HCT116 (cell line): ENCODE measurements at regions of chr1 and their contacts with region 1.

Region 1: DNA sequence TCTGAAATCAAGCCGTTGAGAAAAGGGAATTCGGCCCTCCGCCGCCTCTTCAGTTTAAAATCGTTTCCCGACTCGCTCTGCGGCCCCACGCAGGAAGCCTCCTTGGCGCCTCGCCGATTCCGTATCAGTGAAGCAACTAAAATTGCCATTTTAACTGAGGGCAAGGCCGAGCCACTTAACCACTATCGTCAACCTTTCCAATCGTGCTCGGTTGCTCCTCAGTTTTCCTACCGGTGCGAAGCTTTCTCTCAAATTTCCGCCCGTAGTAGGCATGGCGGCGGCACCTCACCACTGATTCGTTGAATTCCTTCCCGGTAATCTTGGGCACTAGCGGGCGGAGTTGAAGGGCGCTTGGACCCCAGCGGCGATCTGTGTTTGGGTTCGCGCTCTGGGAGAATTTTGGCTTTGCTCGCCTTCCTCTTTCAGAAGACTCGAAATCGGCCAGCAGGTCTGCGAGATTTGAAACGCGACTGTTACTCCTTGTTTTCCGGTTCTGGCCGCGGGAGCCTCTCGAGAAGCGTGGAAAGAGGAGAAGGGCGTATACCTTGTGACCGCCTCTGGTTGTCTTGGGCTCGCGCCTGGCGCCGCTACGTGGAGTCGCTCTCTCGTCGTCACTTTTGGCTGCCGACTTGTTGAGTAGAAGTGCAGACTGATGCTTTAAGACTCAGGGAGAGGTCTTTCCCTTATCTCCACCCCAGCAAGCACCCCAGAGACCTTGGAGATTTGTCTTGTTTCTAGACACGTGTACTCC is at the starts of genes CENPL and DARS2:
- DNase-seq: peak; percentile 96
- ATAC-seq: peak; percentile 89
- H3K4me3 ChIP-seq: peak within 1 kb of the TSS; percentile 96 to 97
- H3K27ac ChIP-seq: peak within 1 kb of the TSS; percentile 82
- H3K4me1 ChIP-seq: peaks cover 2 to 7% of the 10 kb centered on the region in 2 experiments; a peak in 2 of 4 replicates
- H3K27me3 ChIP-seq: no peaks in the 10 kb centered on the region
- CTCF ChIP-seq: no peak
- POLR2A ChIP-seq: peak; percentile 26
- RAD21 ChIP-seq: no peak
- total RNA-seq, gene CENPL: 20.3 TPM
- total RNA-seq, gene DARS2: 25.6 TPM

Region 2: DNA sequence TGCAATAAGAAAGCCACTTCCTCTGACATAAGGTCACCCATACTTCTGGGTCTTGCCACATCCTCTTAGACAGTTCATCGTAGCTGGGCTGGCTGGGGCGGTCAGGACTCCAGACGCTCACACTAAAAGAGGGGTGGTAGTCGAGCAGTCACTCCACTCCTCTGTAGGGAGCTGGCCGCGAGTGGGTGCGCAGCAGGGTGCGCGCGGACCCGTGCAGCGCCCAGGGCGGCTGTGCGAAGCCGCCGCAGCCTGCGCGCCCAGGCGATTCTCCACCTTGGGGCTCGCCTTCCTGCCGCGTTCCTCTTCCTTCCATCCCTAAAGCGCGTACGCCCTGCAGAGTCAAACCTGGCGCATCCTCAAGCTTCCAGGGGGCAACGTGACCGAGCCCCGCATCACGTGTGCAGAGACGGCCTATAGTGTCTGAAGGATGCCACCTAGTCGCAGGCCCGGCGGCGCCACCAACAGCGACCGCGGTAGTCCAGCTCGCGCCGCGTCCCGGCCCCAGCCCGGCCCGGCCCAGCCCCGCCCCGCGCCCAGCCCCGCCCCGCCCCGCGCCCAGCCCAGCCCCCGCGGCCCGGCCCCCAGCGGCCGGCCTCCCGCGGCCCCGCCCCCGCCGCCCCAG is 347.7 kb before region 1 on chr1:
- CTCF ChIA-PET with region 1: no interaction called
- POLR2A ChIA-PET with region 1: no interaction called
- RAD21 ChIA-PET with region 1: no interaction called
- intact Hi-C with region 1: loop called (anchors 5 kb)
- DNase-seq: peak; percentile 85
- ATAC-seq: peak; percentile 95
- H3K4me3 ChIP-seq: peak overlapping the region; percentile 81 to 90
- H3K27ac ChIP-seq: peak overlapping the region; percentile 67
- H3K4me1 ChIP-seq: peaks cover 10 to 36% of the 10 kb centered on the region in 2 experiments
- H3K27me3 ChIP-seq: no peaks in the 10 kb centered on the region
- CTCF ChIP-seq: no peak
- POLR2A ChIP-seq: peak; percentile 75
- RAD21 ChIP-seq: no peak

Region 3: DNA sequence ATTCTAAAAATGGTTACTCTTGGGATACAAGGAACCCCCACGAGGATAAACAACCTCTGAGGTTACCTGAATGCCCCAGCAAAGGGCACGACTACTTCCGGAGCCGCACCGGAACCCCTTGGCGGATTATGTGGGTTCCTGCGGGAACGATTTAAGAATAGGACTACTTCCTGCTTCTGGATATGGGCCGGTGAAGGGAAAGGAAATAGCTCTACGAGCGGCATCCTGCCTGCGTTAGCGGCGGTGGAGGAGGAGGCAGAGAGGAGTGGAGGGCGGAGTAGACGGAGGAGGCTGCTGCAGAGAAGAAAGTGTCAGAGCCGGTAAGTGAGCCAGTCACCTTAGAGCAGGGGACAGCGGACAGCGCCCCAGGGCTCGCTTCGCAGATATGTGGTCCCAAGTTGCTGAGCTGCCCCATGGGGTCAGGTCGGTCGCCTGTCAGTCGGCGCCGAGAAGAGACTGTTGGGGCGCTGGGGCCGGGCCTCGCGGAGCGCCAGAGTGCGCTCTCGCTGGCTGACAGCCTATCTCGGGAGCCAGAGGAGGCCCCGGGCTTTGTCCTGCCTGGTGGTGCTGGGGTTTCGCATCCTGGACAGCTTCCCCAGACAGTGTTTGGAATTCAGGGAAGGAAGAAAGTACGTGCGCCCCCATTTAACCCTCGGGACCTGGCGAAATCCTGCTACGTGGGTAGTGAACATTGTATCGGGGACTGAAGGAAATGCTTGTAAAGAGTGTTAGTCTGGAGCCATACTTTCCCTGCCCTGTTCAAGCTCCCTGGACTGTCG is 109.6 kb before region 1 on chr1 and contains the start of gene KLHL20:
- CTCF ChIA-PET with region 1: no interaction called
- POLR2A ChIA-PET with region 1: interaction called, 4 read pairs
- RAD21 ChIA-PET with region 1: no interaction called
- intact Hi-C with region 1: loop called (anchors 10 kb)
- DNase-seq: peak; percentile 89
- ATAC-seq: peak; percentile 97
- H3K4me3 ChIP-seq: peak within 1 kb of the TSS; percentile 89 to 92
- H3K27ac ChIP-seq: peak within 1 kb of the TSS; percentile 58
- H3K4me1 ChIP-seq: peaks cover 3 to 8% of the 10 kb centered on the region in 2 experiments; a peak in 3 of 4 replicates
- H3K27me3 ChIP-seq: no peaks in the 10 kb centered on the region
- CTCF ChIP-seq: no peak
- POLR2A ChIP-seq: peak; percentile 76
- RAD21 ChIP-seq: peak; percentile 15
- total RNA-seq, gene KLHL20: 16.2 TPM

Region 4: GRCh38 chr1:173749137-173749536 is 75.4 kb before region 1 on chr1:
- CTCF ChIA-PET with region 1: no interaction called
- POLR2A ChIA-PET with region 1: no interaction called
- RAD21 ChIA-PET with region 1: no interaction called
- intact Hi-C with region 1: no loop called
- DNase-seq: no peak
- ATAC-seq: no peak
- H3K4me3 ChIP-seq: no peak overlapping the region
- H3K27ac ChIP-seq: no peak overlapping the region
- H3K4me1 ChIP-seq: no peaks in the 10 kb centered on the region
- H3K27me3 ChIP-seq: no peaks in the 10 kb centered on the region
- CTCF ChIP-seq: no peak
- POLR2A ChIP-seq: no peak
- RAD21 ChIP-seq: no peak

Region 5: DNA sequence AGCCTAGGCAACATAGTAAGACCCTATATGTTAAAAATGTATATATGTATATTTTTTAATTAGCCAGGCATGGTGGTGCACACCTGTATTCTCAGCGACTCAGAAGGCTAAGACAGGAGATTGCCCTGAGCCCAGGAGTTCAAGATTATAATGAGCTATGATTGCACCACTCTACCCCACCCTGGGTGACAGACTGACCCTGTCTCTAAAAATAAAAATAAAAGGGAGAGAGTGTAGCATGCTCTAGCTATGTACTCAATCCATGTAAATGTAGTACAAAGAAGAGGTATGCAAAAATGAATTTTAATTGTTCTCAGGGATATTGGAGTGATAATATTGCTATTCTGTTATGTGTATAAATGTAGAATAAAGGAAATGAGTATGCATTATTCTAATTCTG is 52.9 kb before region 1 on chr1:
- CTCF ChIA-PET with region 1: no interaction called
- POLR2A ChIA-PET with region 1: no interaction called
- RAD21 ChIA-PET with region 1: no interaction called
- intact Hi-C with region 1: loop called (anchors 5 kb)
- DNase-seq: no peak
- ATAC-seq: no peak
- H3K4me3 ChIP-seq: no peak overlapping the region
- H3K27ac ChIP-seq: no peak overlapping the region
- H3K4me1 ChIP-seq: no peaks in the 10 kb centered on the region
- H3K27me3 ChIP-seq: no peaks in the 10 kb centered on the region
- CTCF ChIP-seq: no peak
- POLR2A ChIP-seq: no peak
- RAD21 ChIP-seq: no peak